ENCODE measurements at regions of chr2 and their contacts with region 1.

Region 1: DNA sequence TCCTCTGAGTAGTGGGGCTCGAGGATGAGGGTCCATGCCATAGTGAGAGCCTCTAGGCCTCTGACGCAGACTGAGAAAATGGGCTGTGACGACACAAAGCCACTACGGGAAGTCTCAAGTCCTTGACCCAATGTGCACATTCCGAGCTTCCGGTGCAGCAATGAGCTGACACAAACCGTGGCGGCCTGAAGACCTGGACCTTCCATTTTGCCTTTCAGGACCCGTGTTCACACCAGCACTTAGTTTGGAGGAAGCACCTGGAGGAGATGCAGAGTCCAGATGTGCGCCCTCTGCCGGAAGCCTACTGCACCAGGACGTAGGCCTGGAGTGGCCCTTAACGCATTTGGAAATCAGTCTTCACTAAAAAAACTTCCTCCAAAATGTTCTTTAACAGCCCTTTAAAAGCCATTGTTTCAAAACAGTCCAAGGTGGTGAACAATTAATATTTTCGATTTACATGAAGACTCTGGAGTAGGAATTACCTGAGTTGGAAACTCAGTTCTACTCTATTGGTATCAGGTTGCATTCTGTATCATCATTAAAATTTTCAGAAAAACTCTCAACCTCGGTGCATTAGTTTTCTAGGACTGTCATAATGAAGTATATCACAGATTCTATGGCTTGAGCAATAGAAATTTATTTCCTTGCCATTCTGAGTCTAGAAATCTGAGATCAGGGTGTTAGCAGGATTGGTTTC is 33.9 kb downstream of the BMP10 start:
- DNase-seq: peak; percentile 58
- ATAC-seq: peak; percentile 98
- H3K4me3 ChIP-seq: no peak overlapping the region
- H3K27ac ChIP-seq: no peak overlapping the region
- H3K4me1 ChIP-seq: peaks cover 0 to 5% of the 10 kb centered on the region in 2 experiments; a peak in 1 of 4 replicates
- H3K27me3 ChIP-seq: no peaks in the 10 kb centered on the region
- CTCF ChIP-seq: peak; percentile 75 to 94 (median 89)
- POLR2A ChIP-seq: no peak
- RAD21 ChIP-seq: peak; percentile 57

Region 2: DNA sequence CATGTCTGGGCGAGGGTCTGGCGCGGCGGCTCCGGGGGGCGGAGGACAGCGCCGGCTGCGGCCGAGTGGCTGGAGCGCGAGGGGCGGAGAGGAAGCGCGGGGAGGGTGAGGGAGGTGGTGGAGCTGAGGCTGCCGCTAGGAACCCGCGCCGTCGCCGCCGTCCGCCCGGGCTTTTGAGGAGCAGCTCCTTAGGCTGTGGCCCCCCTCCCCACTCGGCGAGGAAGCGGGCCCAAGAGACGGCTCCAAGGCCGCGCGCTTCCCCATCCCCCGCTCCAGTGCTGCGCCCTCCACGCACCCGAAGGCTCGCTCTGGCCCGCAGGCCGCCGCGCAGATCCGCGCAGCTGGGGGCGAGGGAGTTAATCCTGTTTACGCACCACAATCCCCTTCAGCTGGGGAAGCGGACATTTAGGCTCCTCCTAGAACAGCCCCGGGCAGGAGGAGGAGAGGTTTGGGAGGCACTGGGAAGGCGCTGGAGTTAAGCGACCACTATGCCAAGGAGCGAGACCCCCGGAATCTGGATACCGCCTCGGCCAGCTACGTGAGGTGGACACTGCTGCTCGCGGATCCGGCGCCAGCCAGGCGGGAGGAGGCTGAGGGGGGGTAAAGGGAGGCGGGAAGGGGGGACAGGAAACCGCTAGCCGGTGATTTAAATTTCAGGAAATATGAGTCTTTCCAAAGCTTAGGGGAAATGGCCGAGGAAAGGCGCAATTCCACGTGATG is 517.8 kb before region 1 on chr2 and contains the start of gene CNRIP1:
- CTCF ChIA-PET with region 1: no interaction called
- POLR2A ChIA-PET with region 1: no interaction called
- RAD21 ChIA-PET with region 1: no interaction called
- intact Hi-C with region 1: no loop called
- DNase-seq: no peak
- ATAC-seq: no peak
- H3K4me3 ChIP-seq: no peak within 1 kb of the TSS
- H3K27ac ChIP-seq: no peak within 1 kb of the TSS
- H3K4me1 ChIP-seq: no peaks in the 10 kb centered on the region
- H3K27me3 ChIP-seq: no peaks in the 10 kb centered on the region
- CTCF ChIP-seq: no peak
- POLR2A ChIP-seq: no peak
- RAD21 ChIP-seq: no peak
- total RNA-seq, gene CNRIP1: not detected

Region 3: DNA sequence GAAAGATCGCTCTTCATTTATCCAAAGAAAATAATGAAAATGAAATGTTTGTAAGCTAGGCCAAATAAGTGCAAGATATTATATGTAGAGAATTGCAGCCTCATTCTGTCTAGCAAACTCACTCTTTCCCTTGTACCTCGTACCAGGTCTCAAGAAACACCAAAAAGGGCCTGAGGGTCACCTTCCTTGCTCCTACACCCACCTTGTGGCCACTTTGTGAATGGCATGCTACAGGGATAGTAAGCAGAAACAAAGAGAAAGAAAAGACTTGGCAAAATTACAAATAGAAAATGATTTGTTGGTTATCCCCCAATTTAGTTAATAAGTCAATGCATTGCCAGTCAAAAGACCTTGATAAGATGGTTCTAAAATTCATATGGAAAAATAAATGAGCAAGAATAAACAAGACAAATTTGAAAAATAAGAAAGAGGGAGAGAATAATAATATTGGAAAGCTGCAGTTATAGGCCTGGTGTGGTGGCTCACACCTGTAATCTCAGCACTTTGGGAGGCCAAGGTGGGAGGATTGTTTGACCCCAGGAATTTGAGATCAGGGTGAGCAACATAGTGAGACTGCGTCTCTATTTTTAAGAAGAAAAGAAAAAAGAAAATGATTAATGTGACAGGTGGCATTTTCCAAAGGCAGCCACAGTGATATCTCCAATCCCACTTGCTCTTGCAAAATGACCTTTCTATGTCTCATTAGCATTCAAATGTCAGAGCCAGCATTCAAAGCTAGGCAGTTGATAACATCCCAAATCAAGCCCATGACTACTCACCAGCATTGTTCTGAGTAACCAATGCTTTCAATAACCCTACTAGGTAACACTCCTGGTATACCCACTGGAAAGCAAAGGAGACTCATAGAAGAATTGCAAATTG is 72.7 kb after region 1 on chr2:
- CTCF ChIA-PET with region 1: interaction called, 7 read pairs
- POLR2A ChIA-PET with region 1: no interaction called
- RAD21 ChIA-PET with region 1: no interaction called
- intact Hi-C with region 1: loop called (anchors 5 kb)
- DNase-seq: peak; percentile 73
- ATAC-seq: peak; percentile 57
- H3K4me3 ChIP-seq: no peak overlapping the region
- H3K27ac ChIP-seq: no peak overlapping the region
- H3K4me1 ChIP-seq: peaks cover 20 to 23% of the 10 kb centered on the region in 2 experiments
- H3K27me3 ChIP-seq: no peaks in the 10 kb centered on the region
- CTCF ChIP-seq: peak; percentile 82 to 87 (median 83)
- POLR2A ChIP-seq: no peak
- RAD21 ChIP-seq: peak; percentile 85